Gastrocnemius medialis (tissue), 4 donors: ENCODE measurements at regions of chr10 and their contacts with region 1.

Region 1: GRCh38 chr10:43689955-43690771 is 41.5 kb upstream of the ZNF32 start:
- DNase-seq: peak; percentile 55 to 68
- ATAC-seq: peak; percentile 96 to 97
- H3K4me3 ChIP-seq: peak overlapping the region; percentile 55 to 91 (median 71)
- H3K27ac ChIP-seq: peak overlapping the region; percentile 68 to 85 (median 80)
- H3K4me1 ChIP-seq: peaks cover 0 to 8% of the 10 kb centered on the region in 2 donors
- H3K27me3 ChIP-seq: no peaks in the 10 kb centered on the region
- CTCF ChIP-seq: peak; percentile 81 to 95 (median 91)
- POLR2A ChIP-seq: peak in 1 of 2 donors; percentile 10

Region 2: DNA sequence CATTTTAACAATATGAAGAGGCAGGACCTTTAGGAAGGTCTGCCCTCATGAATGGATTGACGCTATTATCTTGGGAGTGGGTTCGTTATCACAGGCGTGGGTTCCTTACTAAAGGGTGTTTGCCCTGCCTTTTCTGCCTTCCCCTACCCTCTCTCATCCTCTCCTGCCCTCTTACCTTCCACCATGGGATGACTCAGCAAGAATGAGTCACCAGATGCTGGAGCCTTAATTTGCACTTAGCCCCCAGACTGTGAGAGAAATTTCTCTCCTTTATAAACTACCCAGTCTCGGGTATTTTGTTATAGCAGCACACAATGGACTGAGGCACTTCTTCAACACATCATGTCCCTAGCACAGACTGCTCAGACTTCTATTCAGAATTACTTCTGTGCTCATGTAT is 10.1 kb before region 1 on chr10:
- in situ Hi-C with region 1: no loop called
- intact Hi-C with region 1: loop called (anchors 1 kb)
- DNase-seq: no peak
- ATAC-seq: no peak
- H3K4me3 ChIP-seq: no peak overlapping the region
- H3K27ac ChIP-seq: no peak overlapping the region
- H3K4me1 ChIP-seq: peaks cover 0 to 20% of the 10 kb centered on the region in 2 donors
- H3K27me3 ChIP-seq: no peaks in the 10 kb centered on the region
- CTCF ChIP-seq: no peak
- POLR2A ChIP-seq: no peak

Region 3: DNA sequence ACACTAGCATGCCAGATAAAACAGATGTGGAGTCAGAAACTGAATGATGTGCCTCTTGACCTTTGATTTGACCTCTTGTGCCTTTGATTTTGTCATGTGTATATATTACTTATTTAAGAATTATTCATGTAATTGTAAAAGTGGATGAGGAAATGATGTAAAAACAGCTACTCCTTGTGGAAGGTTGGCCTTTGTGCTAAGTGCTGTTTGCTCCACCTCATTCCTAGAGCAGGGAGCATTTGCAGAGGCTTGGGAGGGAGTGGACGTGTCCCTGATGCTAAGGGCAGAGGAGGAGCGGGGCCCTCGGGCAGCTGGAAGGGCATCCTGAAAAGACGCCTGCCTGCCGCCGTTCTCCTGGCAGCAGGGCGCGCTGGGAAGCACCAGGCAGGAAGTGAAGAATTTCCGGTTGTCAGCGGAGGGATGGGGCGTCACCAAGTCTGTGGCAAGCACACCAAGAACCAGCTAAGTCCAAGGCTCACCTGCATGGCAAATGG is 156.1 kb after region 1 on chr10:
- in situ Hi-C with region 1: no loop called
- intact Hi-C with region 1: loop called (anchors 5 kb)
- DNase-seq: no peak
- ATAC-seq: peak; percentile 45 to 62
- H3K4me3 ChIP-seq: no peak overlapping the region
- H3K27ac ChIP-seq: peak overlapping the region; percentile 39 to 72 (median 48)
- H3K4me1 ChIP-seq: no peaks in the 10 kb centered on the region
- H3K27me3 ChIP-seq: no peaks in the 10 kb centered on the region
- CTCF ChIP-seq: no peak
- POLR2A ChIP-seq: no peak

Region 4: DNA sequence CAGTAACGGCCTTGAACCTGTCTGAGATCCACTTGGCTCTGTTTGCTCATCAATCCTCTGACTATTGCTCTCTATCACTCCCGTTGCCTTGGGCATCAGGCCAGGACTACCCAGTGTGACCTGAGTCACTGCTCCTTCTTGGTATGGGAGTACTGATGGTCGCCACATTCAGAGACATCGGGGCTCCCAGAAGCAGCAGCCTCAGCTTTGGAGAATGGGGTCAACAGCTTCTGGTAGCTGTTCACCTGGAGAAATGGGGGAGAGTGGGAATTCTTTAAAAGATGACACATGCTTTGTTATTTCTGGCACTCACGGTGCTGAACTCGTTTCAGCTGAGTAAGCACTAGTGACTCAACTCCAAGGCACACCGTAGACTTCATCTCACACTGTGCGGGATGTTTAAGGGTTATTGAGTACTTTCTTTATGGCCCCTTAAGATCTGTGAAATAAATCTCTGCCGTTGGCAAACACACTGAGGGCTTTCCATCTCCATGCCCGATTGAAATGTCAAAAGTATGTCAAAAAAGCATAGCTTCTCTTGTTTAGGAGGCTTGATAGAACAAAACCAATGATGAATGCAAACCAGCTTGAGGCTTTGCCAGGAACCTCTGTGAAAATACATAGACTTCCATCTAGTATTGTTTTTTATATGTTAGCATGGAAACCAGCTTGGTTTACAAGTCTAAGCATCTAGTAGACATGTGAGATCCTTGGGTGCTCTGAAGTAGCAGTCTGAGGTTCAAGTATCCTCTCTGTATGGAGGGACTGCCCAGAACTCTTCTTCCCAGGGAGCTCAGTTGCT is 361.6 kb after region 1 on chr10:
- in situ Hi-C with region 1: loop called in 2 of 4 experiments (anchors 25 kb)
- intact Hi-C with region 1: no loop called
- DNase-seq: no peak
- ATAC-seq: no peak
- H3K4me3 ChIP-seq: no peak overlapping the region
- H3K27ac ChIP-seq: no peak overlapping the region
- H3K4me1 ChIP-seq: no peaks in the 10 kb centered on the region
- H3K27me3 ChIP-seq: no peaks in the 10 kb centered on the region
- CTCF ChIP-seq: no peak
- POLR2A ChIP-seq: no peak

Region 5: DNA sequence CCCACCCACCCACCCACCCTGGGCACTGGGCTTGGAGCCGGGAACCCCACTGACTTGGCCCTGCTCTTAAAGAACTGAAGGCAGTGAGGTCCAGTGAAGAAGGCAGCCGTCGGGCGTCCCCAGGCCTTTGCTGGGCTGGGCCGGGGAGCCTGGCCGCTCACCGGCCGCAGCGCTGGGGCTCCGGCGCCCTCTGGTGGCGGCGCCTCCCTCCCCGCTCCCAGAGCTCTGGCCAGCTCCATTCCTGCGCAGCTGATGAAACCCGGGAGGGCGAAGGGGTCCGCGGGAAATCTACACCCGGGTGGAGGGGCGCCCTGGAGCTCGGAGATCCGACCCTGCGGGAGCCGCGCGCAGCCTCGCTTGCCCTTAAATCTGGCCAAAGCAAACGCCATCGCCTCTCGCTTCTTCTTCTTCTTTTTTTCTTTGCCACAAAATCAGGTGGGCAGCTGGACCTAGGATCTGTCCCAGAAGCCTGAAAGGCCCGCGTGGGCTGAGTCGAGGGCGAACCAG is 696.4 kb after region 1 on chr10:
- in situ Hi-C with region 1: no loop called
- intact Hi-C with region 1: loop called (anchors 1 kb)
- DNase-seq: peak in 1 of 2 donors; percentile 55
- ATAC-seq: peak; percentile 40 to 51
- H3K4me3 ChIP-seq: peak overlapping the region in 3 of 4 donors; percentile 18 to 32 (median 25)
- H3K27ac ChIP-seq: peak overlapping the region in 3 of 4 donors; percentile 60 to 87 (median 82)
- H3K4me1 ChIP-seq: peaks cover 19 to 26% of the 10 kb centered on the region in 2 donors
- H3K27me3 ChIP-seq: no peaks in the 10 kb centered on the region
- CTCF ChIP-seq: peak; percentile 79 to 95 (median 93)
- POLR2A ChIP-seq: no peak